CD8-positive, alpha-beta T cell (primary cell): ENCODE measurements at regions of chr11 and their contacts with region 1.

Region 1: DNA sequence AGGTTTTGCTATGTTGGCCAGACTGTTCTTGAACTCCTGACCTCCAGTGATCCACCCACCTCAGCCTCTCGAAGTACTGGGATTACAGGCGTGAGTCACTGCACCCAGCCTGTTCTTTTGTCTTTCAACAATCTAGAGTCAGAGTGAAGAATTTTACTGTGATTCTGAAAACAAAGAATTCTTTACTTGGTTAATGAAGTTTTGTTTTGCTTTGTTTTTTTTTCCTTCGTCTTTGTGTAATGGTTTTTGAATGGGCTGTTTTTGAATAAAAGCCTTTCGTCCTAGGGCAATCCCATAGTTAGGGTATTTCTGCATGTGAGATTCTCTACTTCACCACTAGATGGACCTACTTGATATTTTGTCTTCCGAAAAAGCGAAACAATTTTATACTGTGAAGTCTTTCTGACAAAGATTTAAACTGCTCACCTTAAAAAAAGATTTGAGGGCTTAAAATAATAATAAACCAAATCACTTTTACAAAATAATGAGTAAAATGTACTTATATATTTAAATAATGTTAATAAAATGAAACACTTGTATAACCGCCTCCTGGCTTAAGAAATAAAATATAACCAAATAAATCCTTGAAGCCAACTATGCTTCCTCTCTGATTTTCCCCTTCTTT is 43.4 kb upstream of the SC5D start:
- DNase-seq: peak in 2 of 9 experiments; percentile 44 to 66
- ATAC-seq: peak; percentile 80
- H3K4me3 ChIP-seq: no peak overlapping the region
- H3K4me3 Mint-ChIP-seq: no peak overlapping the region
- H3K27ac ChIP-seq: no peak overlapping the region
- H3K27ac Mint-ChIP-seq: no peak overlapping the region
- H3K4me1 ChIP-seq: no peaks in the 10 kb centered on the region
- H3K4me1 Mint-ChIP-seq: peaks cover 5% of the 10 kb centered on the region
- H3K27me3 ChIP-seq: no peaks in the 10 kb centered on the region
- H3K27me3 Mint-ChIP-seq: peaks cover 9% of the 10 kb centered on the region
- CTCF ChIP-seq: peak; percentile 94

Region 2: GRCh38 chr11:121163658-121164308 is 85.4 kb before region 1 on chr11:
- CTCF ChIA-PET with region 1: no interaction called
- POLR2A ChIA-PET with region 1: no interaction called
- intact Hi-C with region 1: no loop called
- DNase-seq: no peak
- ATAC-seq: no peak
- H3K4me3 ChIP-seq: no peak overlapping the region
- H3K4me3 Mint-ChIP-seq: no peak overlapping the region
- H3K27ac ChIP-seq: no peak overlapping the region
- H3K27ac Mint-ChIP-seq: no peak overlapping the region
- H3K4me1 ChIP-seq: no peaks in the 10 kb centered on the region
- H3K4me1 Mint-ChIP-seq: no peaks in the 10 kb centered on the region
- H3K27me3 ChIP-seq: no peaks in the 10 kb centered on the region
- H3K27me3 Mint-ChIP-seq: no peaks in the 10 kb centered on the region
- CTCF ChIP-seq: no peak

Region 3: DNA sequence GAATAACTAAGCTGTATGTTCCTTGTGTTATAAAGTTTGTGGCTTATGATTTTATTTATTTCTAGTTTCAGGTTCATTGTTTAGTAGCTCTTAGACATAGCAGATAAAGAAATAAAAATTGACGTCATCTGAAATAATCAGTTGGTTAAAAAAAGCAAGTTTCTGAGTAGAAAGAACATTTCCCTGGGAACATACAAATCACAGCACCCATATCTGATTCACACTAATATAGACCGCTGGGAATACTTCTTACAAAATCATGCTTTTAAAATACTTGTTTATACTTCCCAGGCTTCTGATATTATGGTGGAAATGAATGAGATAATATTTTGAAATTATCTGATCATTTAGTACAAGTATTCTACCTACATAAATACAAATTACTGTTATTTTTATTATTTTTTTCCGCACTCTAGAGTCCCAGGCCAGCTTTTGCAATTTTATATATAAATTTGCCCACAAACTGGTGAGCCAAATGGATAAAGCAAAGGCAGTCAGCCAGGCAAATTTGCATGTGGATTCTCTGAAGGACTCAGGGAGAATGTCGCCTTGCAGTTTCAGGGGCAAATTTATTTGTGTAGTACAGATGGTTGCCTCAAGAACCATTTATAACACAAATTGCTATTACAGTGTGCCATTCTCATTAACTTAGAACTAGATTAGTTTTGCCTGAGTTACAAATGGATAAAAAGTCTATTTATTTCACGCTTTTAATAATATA is 19.5 kb before region 1 on chr11:
- CTCF ChIA-PET with region 1: interaction called, 5 read pairs
- POLR2A ChIA-PET with region 1: no interaction called
- intact Hi-C with region 1: loop called in 1 of 2 experiments (anchors 1 kb)
- DNase-seq: no peak
- ATAC-seq: no peak
- H3K4me3 ChIP-seq: no peak overlapping the region
- H3K4me3 Mint-ChIP-seq: no peak overlapping the region
- H3K27ac ChIP-seq: no peak overlapping the region
- H3K27ac Mint-ChIP-seq: no peak overlapping the region
- H3K4me1 ChIP-seq: no peaks in the 10 kb centered on the region
- H3K4me1 Mint-ChIP-seq: no peaks in the 10 kb centered on the region
- H3K27me3 ChIP-seq: peaks cover 0 to 2% of the 10 kb centered on the region in 2 experiments
- H3K27me3 Mint-ChIP-seq: peaks cover 27% of the 10 kb centered on the region
- CTCF ChIP-seq: no peak

Region 4: DNA sequence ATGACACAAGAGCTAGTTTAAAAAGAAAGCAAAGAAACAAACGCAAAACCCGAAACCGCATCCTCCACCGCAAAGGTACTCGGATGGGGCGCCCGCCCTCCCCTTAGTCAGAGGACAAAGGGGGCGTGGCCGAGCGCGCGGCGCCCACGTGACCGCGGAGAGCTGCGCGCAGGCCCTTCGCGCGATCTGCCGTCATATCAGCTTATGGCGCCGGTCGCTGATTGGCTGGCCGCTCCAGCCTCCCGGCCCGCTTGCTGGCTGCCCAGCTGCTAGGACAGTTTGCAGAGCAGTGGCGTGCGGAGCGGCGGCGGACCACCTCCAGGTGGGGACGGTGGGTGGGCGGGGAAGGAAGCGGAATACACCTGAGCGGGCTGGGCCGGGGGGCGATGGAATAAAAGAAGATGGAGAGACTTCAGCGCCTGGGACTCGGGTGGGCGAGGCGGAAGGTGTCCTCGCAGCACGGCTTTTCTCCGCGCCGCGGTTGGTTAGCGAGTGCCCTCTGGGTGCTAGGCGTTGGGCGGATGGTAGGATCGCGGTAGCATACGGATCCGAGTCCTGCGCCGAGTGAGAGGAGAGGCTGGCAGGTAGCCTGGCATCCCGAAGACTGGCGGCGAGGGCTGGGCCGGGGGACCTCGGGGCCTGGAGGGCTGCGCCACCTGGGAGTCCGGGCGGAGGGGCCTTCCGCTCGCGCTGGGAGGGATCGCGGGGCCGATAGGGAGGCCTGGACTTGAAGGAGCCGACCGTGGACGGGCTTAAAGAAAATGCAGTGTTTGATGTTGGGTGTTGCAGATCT is 43.5 kb after region 1 on chr11 and contains the start of gene SC5D:
- CTCF ChIA-PET with region 1: interaction called, 4 read pairs
- POLR2A ChIA-PET with region 1: no interaction called
- intact Hi-C with region 1: loop called (anchors 1 to 5 kb)
- DNase-seq: peak; percentile 86 to 98 (median 95)
- ATAC-seq: peak; percentile 83
- H3K4me3 ChIP-seq: peak within 1 kb of the TSS; percentile 77 to 79
- H3K4me3 Mint-ChIP-seq: peak within 1 kb of the TSS; percentile 97
- H3K27ac ChIP-seq: peak within 1 kb of the TSS; percentile 94 to 97
- H3K27ac Mint-ChIP-seq: peak within 1 kb of the TSS; percentile 99
- H3K4me1 ChIP-seq: peaks cover 14% of the 10 kb centered on the region
- H3K4me1 Mint-ChIP-seq: peaks cover 58% of the 10 kb centered on the region
- H3K27me3 ChIP-seq: no peaks in the 10 kb centered on the region
- H3K27me3 Mint-ChIP-seq: no peaks in the 10 kb centered on the region
- CTCF ChIP-seq: no peak
- total RNA-seq, gene SC5D: 69.2 to 70.1 TPM

Region 5: GRCh38 chr11:121309688-121310087 is 60.5 kb after region 1 on chr11:
- CTCF ChIA-PET with region 1: interaction called, 4 read pairs
- POLR2A ChIA-PET with region 1: no interaction called
- intact Hi-C with region 1: loop called in 1 of 2 experiments (anchors 5 kb)
- DNase-seq: no peak
- ATAC-seq: no peak
- H3K4me3 ChIP-seq: no peak overlapping the region
- H3K4me3 Mint-ChIP-seq: no peak overlapping the region
- H3K27ac ChIP-seq: no peak overlapping the region
- H3K27ac Mint-ChIP-seq: peak overlapping the region; percentile 10
- H3K4me1 ChIP-seq: no peaks in the 10 kb centered on the region
- H3K4me1 Mint-ChIP-seq: peaks cover 10% of the 10 kb centered on the region
- H3K27me3 ChIP-seq: no peaks in the 10 kb centered on the region
- H3K27me3 Mint-ChIP-seq: no peaks in the 10 kb centered on the region
- CTCF ChIP-seq: no peak

Region 6: GRCh38 chr11:122505304-122506006 is 1256.3 kb after region 1 on chr11:
- CTCF ChIA-PET with region 1: no interaction called
- POLR2A ChIA-PET with region 1: no interaction called
- intact Hi-C with region 1: loop called (anchors 10 kb)
- DNase-seq: peak in 8 of 9 experiments; percentile 4 to 50 (median 38)
- ATAC-seq: no peak
- H3K4me3 ChIP-seq: no peak overlapping the region
- H3K4me3 Mint-ChIP-seq: no peak overlapping the region
- H3K27ac ChIP-seq: no peak overlapping the region
- H3K27ac Mint-ChIP-seq: no peak overlapping the region
- H3K4me1 ChIP-seq: no peaks in the 10 kb centered on the region
- H3K4me1 Mint-ChIP-seq: no peaks in the 10 kb centered on the region
- H3K27me3 ChIP-seq: no peaks in the 10 kb centered on the region
- H3K27me3 Mint-ChIP-seq: peaks cover 34% of the 10 kb centered on the region
- CTCF ChIP-seq: peak; percentile 39